ENCODE measurements at regions of chr20 and their contacts with region 1.

Region 1: GRCh38 chr20:44310664-44311639 is at the start of gene FITM2:
- DNase-seq: peak; percentile 97
- H3K4me3 ChIP-seq: peak within 1 kb of the TSS; percentile 81
- H3K27ac ChIP-seq: peak within 1 kb of the TSS; percentile 51
- H3K4me1 ChIP-seq: peaks cover 4% of the 10 kb centered on the region
- H3K27me3 ChIP-seq: no peaks in the 10 kb centered on the region
- CTCF ChIP-seq: peak; percentile 99
- total RNA-seq, gene FITM2: 5.7 TPM in 2 replicates

Region 2: DNA sequence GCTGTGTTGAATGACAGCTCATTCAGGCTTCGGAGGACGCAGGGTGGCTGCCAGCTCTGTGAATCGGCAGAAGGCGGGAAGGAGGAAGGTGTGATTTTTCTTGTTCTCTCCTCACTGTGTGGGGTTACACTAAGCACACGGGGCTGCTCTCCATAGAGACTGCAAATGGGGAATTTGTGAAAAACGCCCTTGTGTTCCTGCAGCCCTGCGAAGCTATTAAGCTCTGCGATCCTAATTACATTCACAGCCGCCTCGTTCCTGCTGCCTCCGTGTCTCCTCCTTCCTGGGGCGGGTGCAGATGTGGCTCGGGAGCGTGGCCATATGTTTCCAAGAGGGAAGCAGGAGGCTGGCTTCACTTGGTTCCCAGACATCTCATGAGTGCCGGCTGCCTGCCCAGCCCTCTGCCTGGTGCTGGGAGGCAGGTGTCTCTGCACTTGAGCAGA is 272.2 kb before region 1 on chr20:
- CTCF ChIA-PET with region 1: no interaction called
- POLR2A ChIA-PET with region 1: no interaction called
- intact Hi-C with region 1: no loop called
- DNase-seq: no peak
- H3K4me3 ChIP-seq: no peak overlapping the region
- H3K27ac ChIP-seq: no peak overlapping the region
- H3K4me1 ChIP-seq: no peaks in the 10 kb centered on the region
- H3K27me3 ChIP-seq: no peaks in the 10 kb centered on the region
- CTCF ChIP-seq: no peak

Region 3: DNA sequence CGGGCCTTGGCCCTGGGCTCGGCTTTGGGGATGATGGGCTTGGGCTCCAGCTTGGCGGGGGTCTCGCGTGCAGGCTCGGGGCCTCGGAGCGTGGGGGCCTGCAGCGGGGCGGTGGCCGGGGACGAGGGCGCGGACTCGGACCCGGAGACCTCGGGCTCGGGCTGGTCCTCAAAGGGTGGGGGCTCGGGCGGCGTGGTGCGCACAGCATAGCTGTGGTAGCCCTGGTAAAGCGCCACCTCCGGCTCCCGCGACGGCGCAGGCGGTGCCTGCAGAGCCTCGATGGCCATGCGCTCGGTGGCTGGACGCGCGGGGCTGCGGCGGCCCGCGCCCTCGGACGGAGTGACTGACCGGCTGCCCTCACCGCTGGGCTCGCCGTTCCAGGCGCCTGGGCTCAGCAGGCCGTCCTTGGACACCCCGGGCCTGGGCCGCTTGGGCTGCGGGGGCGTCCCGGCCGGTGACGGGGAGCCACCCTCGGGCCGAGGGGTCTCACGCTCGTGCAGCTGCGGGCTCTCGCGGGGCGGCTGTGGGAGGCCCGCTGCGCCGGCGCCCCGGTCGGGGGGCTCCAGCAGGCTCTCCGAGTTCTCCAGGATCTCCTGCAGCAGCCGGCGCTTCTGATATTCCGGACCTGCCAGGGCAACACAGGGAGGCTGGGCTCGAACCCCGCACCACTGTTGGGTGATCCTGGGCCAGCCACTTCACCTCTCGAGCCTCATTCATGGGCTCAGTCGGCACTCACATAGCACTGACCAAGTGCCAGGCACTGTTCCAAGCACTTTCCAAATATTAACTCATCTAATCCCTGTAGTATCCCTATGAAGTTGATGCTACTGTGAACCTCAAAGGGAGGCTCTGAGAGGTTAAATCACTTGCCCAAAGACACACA is 194.9 kb before region 1 on chr20:
- CTCF ChIA-PET with region 1: interaction called, 11 read pairs
- POLR2A ChIA-PET with region 1: no interaction called
- intact Hi-C with region 1: loop called (anchors 5 kb)
- DNase-seq: no peak
- H3K4me3 ChIP-seq: no peak overlapping the region
- H3K27ac ChIP-seq: no peak overlapping the region
- H3K4me1 ChIP-seq: no peaks in the 10 kb centered on the region
- H3K27me3 ChIP-seq: no peaks in the 10 kb centered on the region
- CTCF ChIP-seq: no peak

Region 4: GRCh38 chr20:44166477-44166876 is 144.5 kb before region 1 on chr20:
- CTCF ChIA-PET with region 1: no interaction called
- POLR2A ChIA-PET with region 1: no interaction called
- intact Hi-C with region 1: no loop called
- DNase-seq: peak; percentile 80
- H3K4me3 ChIP-seq: no peak overlapping the region
- H3K27ac ChIP-seq: peak overlapping the region; percentile 58
- H3K4me1 ChIP-seq: peaks cover 16% of the 10 kb centered on the region
- H3K27me3 ChIP-seq: no peaks in the 10 kb centered on the region
- CTCF ChIP-seq: no peak

Region 5: GRCh38 chr20:44217342-44218092 is 93.4 kb before region 1 on chr20:
- CTCF ChIA-PET with region 1: interaction called, 28 read pairs
- POLR2A ChIA-PET with region 1: no interaction called
- intact Hi-C with region 1: loop called (anchors 1 kb)
- DNase-seq: peak; percentile 74
- H3K4me3 ChIP-seq: no peak overlapping the region
- H3K27ac ChIP-seq: no peak overlapping the region
- H3K4me1 ChIP-seq: no peaks in the 10 kb centered on the region
- H3K27me3 ChIP-seq: no peaks in the 10 kb centered on the region
- CTCF ChIP-seq: peak; percentile 86

Region 6: GRCh38 chr20:44326391-44327159 is 15.6 kb after region 1 on chr20:
- CTCF ChIA-PET with region 1: interaction called, 11 read pairs
- POLR2A ChIA-PET with region 1: no interaction called
- intact Hi-C with region 1: no loop called
- DNase-seq: no peak
- H3K4me3 ChIP-seq: peak overlapping the region; percentile 24
- H3K27ac ChIP-seq: no peak overlapping the region
- H3K4me1 ChIP-seq: no peaks in the 10 kb centered on the region
- H3K27me3 ChIP-seq: no peaks in the 10 kb centered on the region
- CTCF ChIP-seq: no peak